Activated CD8-positive, alpha-beta T cell treated with anti-CD3 and anti-CD28 coated beads, Interleukin-2, amount 10 ng/mL, durations not matched to agents 7 days and 5 days (primary cell): ENCODE measurements at regions of chr18 and their contacts with region 1.

Region 1: DNA sequence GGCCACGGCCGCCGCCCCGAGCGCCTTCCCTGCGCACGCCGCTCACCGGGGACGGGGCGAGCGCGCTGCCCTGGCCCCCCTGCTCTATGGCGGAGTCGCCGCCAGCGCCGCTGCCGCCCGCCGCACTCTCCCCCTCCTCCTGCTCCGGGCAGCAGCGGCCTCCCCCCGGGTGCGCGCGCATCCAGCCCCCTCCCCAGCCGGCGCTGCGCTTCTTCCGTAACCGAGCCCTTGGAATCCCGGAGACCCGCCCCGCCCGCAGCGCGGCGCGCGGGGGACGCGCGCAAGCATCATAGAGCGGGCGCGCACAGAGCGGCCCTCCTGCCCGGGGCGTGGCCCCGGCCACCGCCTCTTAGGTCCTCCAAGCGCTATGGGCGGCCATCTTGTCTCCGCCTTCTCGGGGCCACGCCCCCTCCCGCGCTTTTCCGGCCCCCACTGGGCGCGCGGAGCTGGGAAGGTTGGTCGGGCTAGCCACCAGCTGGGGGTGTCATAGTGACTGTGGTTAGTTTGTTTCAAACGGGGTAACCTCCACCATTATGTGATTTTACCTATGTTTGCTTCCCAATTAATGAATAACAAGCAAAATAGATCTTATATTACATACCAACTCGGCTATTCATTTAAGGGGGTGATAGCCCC is at the start of gene MBD2:
- DNase-seq: peak; percentile 95
- ATAC-seq: peak; percentile 96
- H3K4me3 Mint-ChIP-seq: peak within 1 kb of the TSS; percentile 93
- H3K27ac Mint-ChIP-seq: peak within 1 kb of the TSS; percentile 94
- H3K4me1 Mint-ChIP-seq: peaks cover 36% of the 10 kb centered on the region
- H3K27me3 Mint-ChIP-seq: no peaks in the 10 kb centered on the region
- total RNA-seq, gene MBD2: 122 to 126 TPM

Region 2: GRCh38 chr18:54210463-54210862 is 14.0 kb before region 1 on chr18:
- CTCF ChIA-PET with region 1: interaction called, 15 read pairs
- POLR2A ChIA-PET with region 1: interaction called, 4 read pairs
- DNase-seq: no peak
- ATAC-seq: no peak
- H3K4me3 Mint-ChIP-seq: no peak overlapping the region
- H3K27ac Mint-ChIP-seq: peak overlapping the region; percentile 35
- H3K4me1 Mint-ChIP-seq: peaks cover 43% of the 10 kb centered on the region
- H3K27me3 Mint-ChIP-seq: no peaks in the 10 kb centered on the region

Region 3: DNA sequence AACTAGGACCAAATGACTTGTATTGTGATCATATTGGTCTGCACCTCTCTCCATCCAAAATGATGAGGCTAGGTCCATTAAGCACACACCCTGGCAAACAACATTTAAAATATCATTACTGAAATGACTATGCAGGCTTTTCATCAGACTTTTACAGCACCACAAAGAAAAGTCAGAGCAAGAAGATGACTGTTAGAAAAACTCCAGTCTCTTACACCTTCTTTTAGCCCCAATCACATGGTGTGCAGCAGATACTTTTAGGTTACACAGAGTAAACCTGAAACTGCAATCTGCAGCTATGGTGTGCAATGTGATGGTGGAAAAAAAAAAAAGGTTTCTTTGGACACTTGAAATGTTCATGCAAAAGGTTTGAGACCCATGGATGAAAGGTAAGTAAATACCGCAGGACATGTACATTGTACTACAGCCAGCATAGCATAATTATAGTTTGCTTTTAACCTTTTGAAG is 39.4 kb after region 1 on chr18:
- CTCF ChIA-PET with region 1: interaction called, 69 read pairs
- POLR2A ChIA-PET with region 1: interaction called, 28 read pairs
- DNase-seq: no peak
- ATAC-seq: peak; percentile 62
- H3K4me3 Mint-ChIP-seq: no peak overlapping the region
- H3K27ac Mint-ChIP-seq: peak overlapping the region; percentile 85
- H3K4me1 Mint-ChIP-seq: peaks cover 43% of the 10 kb centered on the region
- H3K27me3 Mint-ChIP-seq: no peaks in the 10 kb centered on the region

Region 4: GRCh38 chr18:54269893-54270844 is 45.7 kb after region 1 on chr18:
- CTCF ChIA-PET with region 1: interaction called, 69 read pairs
- POLR2A ChIA-PET with region 1: interaction called, 28 read pairs
- DNase-seq: peak; percentile 79
- ATAC-seq: peak; percentile 57
- H3K4me3 Mint-ChIP-seq: peak overlapping the region; percentile 83
- H3K27ac Mint-ChIP-seq: peak overlapping the region; percentile 98
- H3K4me1 Mint-ChIP-seq: peaks cover 33% of the 10 kb centered on the region
- H3K27me3 Mint-ChIP-seq: no peaks in the 10 kb centered on the region

Region 5: DNA sequence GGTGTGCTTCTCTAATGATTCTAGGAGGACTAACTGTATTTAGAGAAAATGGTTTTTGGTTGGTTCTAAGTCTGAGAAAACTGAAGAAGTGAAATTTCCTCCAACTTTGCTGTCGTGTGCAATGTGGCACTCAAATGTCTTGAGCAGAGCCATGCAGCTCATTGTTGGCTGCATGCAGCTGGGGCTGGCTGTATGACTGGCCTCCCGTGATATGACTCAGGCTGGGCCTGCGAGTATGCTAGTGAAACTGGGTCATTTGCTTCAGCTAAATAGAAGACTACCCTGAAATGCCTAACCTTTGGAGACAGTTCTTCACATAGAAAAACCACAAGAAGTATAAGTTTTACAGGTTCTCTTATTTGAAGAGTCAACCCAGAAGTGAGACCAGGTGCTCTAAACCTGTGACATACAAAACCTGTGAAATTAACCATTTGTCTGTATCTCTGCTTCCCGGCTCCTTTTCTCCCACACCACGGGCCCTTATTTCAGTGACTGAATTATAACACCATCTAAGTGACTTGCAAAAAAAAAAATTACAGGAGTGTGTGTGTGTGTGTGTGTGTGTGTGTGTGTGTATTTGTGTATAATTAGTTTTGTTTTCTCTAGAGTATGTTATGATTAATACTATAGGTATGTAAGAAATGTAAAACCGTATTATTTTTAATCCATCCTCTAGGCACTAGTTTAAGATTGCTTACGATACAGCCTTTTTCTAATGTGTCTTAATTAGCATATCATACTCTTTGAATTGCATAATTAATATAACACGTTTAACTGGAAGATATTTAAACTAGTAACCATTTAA is 60.7 kb after region 1 on chr18:
- CTCF ChIA-PET with region 1: interaction called, 18 read pairs
- POLR2A ChIA-PET with region 1: no interaction called
- DNase-seq: peak; percentile 61
- ATAC-seq: peak; percentile 96
- H3K4me3 Mint-ChIP-seq: no peak overlapping the region
- H3K27ac Mint-ChIP-seq: peak overlapping the region; percentile 23
- H3K4me1 Mint-ChIP-seq: peaks cover 16% of the 10 kb centered on the region
- H3K27me3 Mint-ChIP-seq: no peaks in the 10 kb centered on the region

Region 6: GRCh38 chr18:54357660-54358494 is 133.4 kb after region 1 on chr18 and contains the starts of genes C18orf54 and STARD6:
- CTCF ChIA-PET with region 1: interaction called, 34 read pairs
- POLR2A ChIA-PET with region 1: interaction called, 25 read pairs
- DNase-seq: peak; percentile 93
- ATAC-seq: peak; percentile 97
- H3K4me3 Mint-ChIP-seq: peak within 1 kb of the TSS; percentile 93
- H3K27ac Mint-ChIP-seq: peak within 1 kb of the TSS; percentile 93
- H3K4me1 Mint-ChIP-seq: peaks cover 23% of the 10 kb centered on the region
- H3K27me3 Mint-ChIP-seq: peaks cover 3% of the 10 kb centered on the region
- total RNA-seq, gene C18orf54: 10.9 to 11.9 TPM
- total RNA-seq, gene STARD6: not detected